ENCODE measurements at regions of chr1 and their contacts with region 1.

Region 1: GRCh38 chr1:6423321-6423999 is 1.1 kb upstream of the ESPN start:
- DNase-seq: peak; percentile 73
- ATAC-seq: peak; percentile 70
- H3K4me3 Mint-ChIP-seq: no peak overlapping the region
- H3K27ac Mint-ChIP-seq: no peak overlapping the region
- H3K4me1 Mint-ChIP-seq: peaks cover 17% of the 10 kb centered on the region
- H3K27me3 Mint-ChIP-seq: peaks cover 68% of the 10 kb centered on the region

Region 2: GRCh38 chr1:6336776-6337622 is 86.5 kb before region 1 on chr1:
- CTCF ChIA-PET with region 1: no interaction called
- DNase-seq: no peak
- ATAC-seq: no peak
- H3K4me3 Mint-ChIP-seq: no peak overlapping the region
- H3K27ac Mint-ChIP-seq: no peak overlapping the region
- H3K4me1 Mint-ChIP-seq: no peaks in the 10 kb centered on the region
- H3K27me3 Mint-ChIP-seq: no peaks in the 10 kb centered on the region

Region 3: DNA sequence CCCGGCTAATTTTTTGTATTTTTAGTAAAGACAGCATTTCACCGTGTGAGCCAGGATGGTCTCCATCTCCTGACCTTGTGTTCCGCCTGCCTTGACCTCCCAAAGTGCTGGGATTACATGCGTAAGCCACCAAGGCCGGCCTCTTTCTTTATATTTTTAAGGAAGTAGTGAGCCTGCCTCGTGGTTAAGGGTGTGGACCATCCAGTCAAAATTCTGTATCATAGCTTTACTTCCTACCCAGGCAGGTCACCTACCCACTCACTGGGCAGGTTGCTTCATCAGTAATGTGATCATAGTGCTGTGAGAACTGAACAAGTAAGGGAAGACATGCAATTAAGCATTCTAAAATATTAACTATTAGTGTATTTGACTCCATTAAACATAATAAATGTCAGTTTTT is 21.8 kb before region 1 on chr1:
- CTCF ChIA-PET with region 1: interaction called, 23 read pairs
- DNase-seq: no peak
- ATAC-seq: no peak
- H3K4me3 Mint-ChIP-seq: no peak overlapping the region
- H3K27ac Mint-ChIP-seq: no peak overlapping the region
- H3K4me1 Mint-ChIP-seq: no peaks in the 10 kb centered on the region
- H3K27me3 Mint-ChIP-seq: peaks cover 26% of the 10 kb centered on the region

Region 4: DNA sequence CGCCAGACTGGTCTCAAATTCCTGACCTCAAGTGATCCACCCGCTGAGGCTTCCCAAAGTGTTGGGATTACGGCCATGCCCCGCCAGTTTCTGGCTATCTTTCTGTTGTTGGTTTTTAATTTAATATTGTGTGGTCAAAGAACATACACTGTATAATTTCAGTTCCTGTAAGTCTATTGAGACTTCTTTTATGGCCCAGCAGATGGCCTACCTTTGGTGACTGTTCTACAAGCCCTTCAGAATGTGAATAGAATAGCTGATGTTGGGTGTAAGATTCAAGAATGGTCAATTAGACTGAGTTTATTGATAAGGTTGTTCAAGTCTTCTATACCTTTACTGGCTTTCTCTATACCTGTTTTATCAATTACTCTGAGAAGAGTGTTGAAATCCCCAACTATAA is 14.4 kb before region 1 on chr1:
- CTCF ChIA-PET with region 1: interaction called, 23 read pairs
- DNase-seq: no peak
- ATAC-seq: no peak
- H3K4me3 Mint-ChIP-seq: no peak overlapping the region
- H3K27ac Mint-ChIP-seq: no peak overlapping the region
- H3K4me1 Mint-ChIP-seq: peaks cover under 1% of the 10 kb centered on the region
- H3K27me3 Mint-ChIP-seq: peaks cover 43% of the 10 kb centered on the region

Region 5: DNA sequence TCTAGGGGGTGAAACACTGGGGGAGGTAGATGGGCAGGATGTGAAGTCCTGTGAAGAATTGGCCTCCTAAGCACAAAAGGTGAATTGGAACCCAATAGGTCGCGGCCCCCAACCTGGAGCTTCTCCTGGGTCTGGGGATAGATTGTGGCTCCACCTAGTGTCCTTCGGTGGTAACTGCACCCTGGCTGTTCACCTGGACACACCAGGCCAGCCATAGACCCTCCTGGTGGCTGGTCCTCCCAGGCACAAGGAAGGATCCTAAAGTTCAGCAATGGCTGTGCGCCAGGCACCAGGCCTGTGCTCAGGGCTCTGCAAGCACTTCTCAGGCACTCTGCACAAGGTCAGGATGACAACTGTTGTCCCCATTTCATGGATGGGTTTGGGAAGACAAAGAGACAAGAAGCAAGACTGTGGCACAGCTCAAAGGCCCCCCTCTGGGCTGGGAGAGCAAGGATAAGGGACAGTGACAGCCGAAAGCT is 14.6 kb after region 1 on chr1:
- CTCF ChIA-PET with region 1: interaction called, 102 read pairs
- DNase-seq: peak; percentile 83
- ATAC-seq: peak; percentile 62
- H3K4me3 Mint-ChIP-seq: no peak overlapping the region
- H3K27ac Mint-ChIP-seq: no peak overlapping the region
- H3K4me1 Mint-ChIP-seq: peaks cover 3% of the 10 kb centered on the region
- H3K27me3 Mint-ChIP-seq: peaks cover 34% of the 10 kb centered on the region

Region 6: DNA sequence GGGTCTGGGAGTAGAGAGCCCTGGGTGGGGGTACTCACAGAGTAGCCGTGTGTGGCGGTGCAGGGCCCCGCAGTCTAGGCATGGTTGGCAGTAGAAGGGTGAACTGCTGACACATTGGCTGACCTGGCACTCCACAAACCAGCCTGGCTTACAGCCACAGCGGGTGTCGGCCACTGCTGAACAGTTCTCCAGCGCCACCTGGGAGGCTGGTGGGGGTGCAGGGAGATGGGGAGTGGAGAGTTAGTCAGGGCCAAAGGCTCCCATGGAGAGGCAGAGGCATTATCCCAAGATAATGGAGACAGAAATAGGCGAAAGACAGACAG is 41.0 kb after region 1 on chr1:
- CTCF ChIA-PET with region 1: interaction called, 18 read pairs
- DNase-seq: no peak
- ATAC-seq: no peak
- H3K4me3 Mint-ChIP-seq: peak overlapping the region; percentile 79
- H3K27ac Mint-ChIP-seq: peak overlapping the region; percentile 78
- H3K4me1 Mint-ChIP-seq: peaks cover 40% of the 10 kb centered on the region
- H3K27me3 Mint-ChIP-seq: no peaks in the 10 kb centered on the region

Region 7: GRCh38 chr1:6587261-6588005 is 164.0 kb after region 1 on chr1:
- CTCF ChIA-PET with region 1: no interaction called
- DNase-seq: no peak
- ATAC-seq: no peak
- H3K4me3 Mint-ChIP-seq: no peak overlapping the region
- H3K27ac Mint-ChIP-seq: peak overlapping the region; percentile 33
- H3K4me1 Mint-ChIP-seq: peaks cover 20% of the 10 kb centered on the region
- H3K27me3 Mint-ChIP-seq: no peaks in the 10 kb centered on the region

Region 8: DNA sequence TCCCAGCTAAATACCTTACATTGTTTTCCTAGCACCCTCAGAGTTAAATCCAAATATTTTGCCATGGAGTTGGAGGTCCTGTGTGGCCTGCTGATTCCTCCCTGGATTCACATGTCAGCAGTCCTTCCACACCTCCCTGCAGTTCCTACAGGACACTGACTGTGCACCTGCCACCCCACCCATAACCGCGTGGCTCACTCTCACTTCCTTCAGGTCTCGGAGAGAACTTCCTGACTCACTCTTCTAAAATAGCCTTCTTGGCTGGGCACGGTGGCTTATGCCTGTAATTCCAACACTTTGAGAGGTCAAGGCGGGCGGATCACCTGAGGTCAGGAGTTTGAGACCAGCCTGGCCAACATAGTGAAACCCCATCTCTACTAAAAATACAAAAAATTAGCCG is 353.4 kb after region 1 on chr1:
- CTCF ChIA-PET with region 1: no interaction called
- DNase-seq: no peak
- ATAC-seq: no peak
- H3K4me3 Mint-ChIP-seq: no peak overlapping the region
- H3K27ac Mint-ChIP-seq: no peak overlapping the region
- H3K4me1 Mint-ChIP-seq: peaks cover 19% of the 10 kb centered on the region
- H3K27me3 Mint-ChIP-seq: peaks cover 11% of the 10 kb centered on the region

Measured in activated CD8-positive, alpha-beta memory T cell treated with anti-CD3 and anti-CD28 coated beads, Interleukin-2, amount 10 ng/mL, durations not matched to agents 7 days and 5 days (primary cell).